CD4-positive, alpha-beta T cell (primary cell): ENCODE measurements at regions of chr1 and their contacts with region 1.

Region 1: GRCh38 chr1:64923294-64923721 is 43.0 kb downstream of the JAK1 start:
- DNase-seq: peak in 4 of 14 experiments; percentile 16 to 68 (median 34)
- ATAC-seq: peak; percentile 40
- H3K4me3 ChIP-seq: no peak overlapping the region
- H3K4me3 Mint-ChIP-seq: peak overlapping the region; percentile 22
- H3K27ac ChIP-seq: no peak overlapping the region
- H3K27ac Mint-ChIP-seq: peak overlapping the region; percentile 57
- H3K4me1 ChIP-seq: peaks cover 66% of the 10 kb centered on the region
- H3K4me1 Mint-ChIP-seq: peaks cover 99% of the 10 kb centered on the region
- H3K27me3 ChIP-seq: no peaks in the 10 kb centered on the region
- H3K27me3 Mint-ChIP-seq: no peaks in the 10 kb centered on the region
- CTCF ChIP-seq: no peak

Region 2: DNA sequence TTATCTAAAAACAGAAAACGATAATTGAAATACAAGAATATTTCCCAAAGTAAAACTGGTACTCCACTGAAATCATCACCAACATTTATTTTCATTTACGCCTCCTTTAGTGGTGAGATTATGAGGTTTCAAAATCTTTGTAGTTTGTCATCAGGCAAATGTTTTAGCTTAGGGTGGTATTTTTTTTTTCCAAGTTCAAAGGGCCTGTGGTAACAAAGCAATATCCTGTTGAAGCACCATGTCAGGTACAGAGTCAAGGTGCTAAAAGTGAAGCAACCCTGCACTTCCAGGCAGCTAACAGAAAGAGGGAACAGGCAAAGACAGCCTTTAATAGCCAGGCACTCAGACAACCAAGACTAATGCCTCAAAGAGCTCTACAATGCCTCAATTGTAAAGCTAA is 46.2 kb before region 1 on chr1:
- CTCF ChIA-PET with region 1: interaction called, 4 read pairs
- POLR2A ChIA-PET with region 1: interaction called, 4 read pairs
- intact Hi-C with region 1: loop called in 1 of 2 experiments (anchors 5 kb)
- DNase-seq: peak in 10 of 14 experiments; percentile 15 to 90 (median 36)
- ATAC-seq: peak; percentile 93
- H3K4me3 ChIP-seq: no peak overlapping the region
- H3K4me3 Mint-ChIP-seq: peak overlapping the region; percentile 68
- H3K27ac ChIP-seq: peak overlapping the region in 1 of 2 donors; percentile 53
- H3K27ac Mint-ChIP-seq: peak overlapping the region; percentile 82
- H3K4me1 ChIP-seq: peaks cover 33% of the 10 kb centered on the region
- H3K4me1 Mint-ChIP-seq: peaks cover 84% of the 10 kb centered on the region
- H3K27me3 ChIP-seq: no peaks in the 10 kb centered on the region
- H3K27me3 Mint-ChIP-seq: no peaks in the 10 kb centered on the region
- CTCF ChIP-seq: no peak

Region 3: DNA sequence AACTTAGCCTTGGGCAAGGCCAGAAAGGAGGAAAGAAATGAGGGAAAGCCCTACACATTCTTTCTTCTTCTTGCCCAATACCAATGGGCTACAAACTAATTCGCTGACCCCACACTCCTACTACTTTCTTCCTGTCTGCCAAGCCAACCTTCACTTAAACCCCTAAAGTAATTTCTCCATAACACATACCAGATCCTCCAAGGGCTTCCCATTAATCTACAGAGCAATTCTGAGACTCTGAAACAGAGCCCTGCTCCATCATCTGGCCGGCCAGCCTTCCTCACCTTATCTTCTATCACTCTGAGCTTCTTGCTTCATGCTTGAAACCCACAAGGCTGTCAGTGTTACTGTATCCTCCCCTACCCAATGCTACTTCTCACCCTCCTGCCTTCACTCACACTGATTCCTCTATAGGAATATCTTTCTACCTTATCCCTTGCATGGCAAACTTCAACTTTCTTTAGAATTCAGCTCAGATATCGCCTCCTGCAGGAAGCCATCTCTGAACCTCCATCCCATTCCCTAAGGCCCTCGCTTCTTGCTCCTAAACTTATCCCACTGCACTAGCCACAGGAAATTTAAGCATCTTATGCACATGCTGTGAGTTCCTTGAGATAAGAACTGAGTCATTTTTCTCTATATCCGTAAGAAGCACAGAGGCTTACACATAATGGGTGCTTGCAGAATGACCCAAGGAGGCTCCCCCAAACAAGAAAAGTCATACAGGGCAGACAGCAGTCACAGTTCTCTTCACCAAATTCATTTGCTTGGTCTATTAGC is 38.9 kb before region 1 on chr1:
- CTCF ChIA-PET with region 1: no interaction called
- POLR2A ChIA-PET with region 1: no interaction called
- intact Hi-C with region 1: loop called (anchors 5 kb)
- DNase-seq: no peak
- ATAC-seq: no peak
- H3K4me3 ChIP-seq: no peak overlapping the region
- H3K4me3 Mint-ChIP-seq: no peak overlapping the region
- H3K27ac ChIP-seq: no peak overlapping the region
- H3K27ac Mint-ChIP-seq: peak overlapping the region; percentile 2
- H3K4me1 ChIP-seq: peaks cover 24% of the 10 kb centered on the region
- H3K4me1 Mint-ChIP-seq: peaks cover 82% of the 10 kb centered on the region
- H3K27me3 ChIP-seq: no peaks in the 10 kb centered on the region
- H3K27me3 Mint-ChIP-seq: no peaks in the 10 kb centered on the region
- CTCF ChIP-seq: no peak

Region 4: GRCh38 chr1:64906447-64906846 is 16.9 kb before region 1 on chr1:
- CTCF ChIA-PET with region 1: interaction called, 5 read pairs
- POLR2A ChIA-PET with region 1: interaction called, 4 read pairs
- intact Hi-C with region 1: loop called (anchors 2 kb)
- DNase-seq: no peak
- ATAC-seq: no peak
- H3K4me3 ChIP-seq: no peak overlapping the region
- H3K4me3 Mint-ChIP-seq: peak overlapping the region; percentile 26
- H3K27ac ChIP-seq: no peak overlapping the region
- H3K27ac Mint-ChIP-seq: peak overlapping the region; percentile 29
- H3K4me1 ChIP-seq: peaks cover 35% of the 10 kb centered on the region
- H3K4me1 Mint-ChIP-seq: peaks cover 97% of the 10 kb centered on the region
- H3K27me3 ChIP-seq: no peaks in the 10 kb centered on the region
- H3K27me3 Mint-ChIP-seq: no peaks in the 10 kb centered on the region
- CTCF ChIP-seq: no peak

Region 5: GRCh38 chr1:64940025-64940424 is 16.7 kb after region 1 on chr1:
- CTCF ChIA-PET with region 1: interaction called, 3 read pairs
- POLR2A ChIA-PET with region 1: interaction called, 6 read pairs
- intact Hi-C with region 1: loop called in 1 of 2 experiments (anchors 2 kb)
- DNase-seq: no peak
- ATAC-seq: peak; percentile 62
- H3K4me3 ChIP-seq: no peak overlapping the region
- H3K4me3 Mint-ChIP-seq: peak overlapping the region; percentile 72
- H3K27ac ChIP-seq: no peak overlapping the region
- H3K27ac Mint-ChIP-seq: peak overlapping the region; percentile 69
- H3K4me1 ChIP-seq: peaks cover 40% of the 10 kb centered on the region
- H3K4me1 Mint-ChIP-seq: peaks cover 91% of the 10 kb centered on the region
- H3K27me3 ChIP-seq: no peaks in the 10 kb centered on the region
- H3K27me3 Mint-ChIP-seq: no peaks in the 10 kb centered on the region
- CTCF ChIP-seq: no peak

Region 6: GRCh38 chr1:64956733-64957441 is 33.6 kb after region 1 on chr1:
- CTCF ChIA-PET with region 1: interaction called, 9 read pairs
- POLR2A ChIA-PET with region 1: interaction called, 5 read pairs
- intact Hi-C with region 1: loop called (anchors 5 kb)
- DNase-seq: peak in 4 of 14 experiments; percentile 26 to 47 (median 42)
- ATAC-seq: peak; percentile 31
- H3K4me3 ChIP-seq: peak overlapping the region; percentile 8
- H3K4me3 Mint-ChIP-seq: no peak overlapping the region
- H3K27ac ChIP-seq: peak overlapping the region; percentile 1 to 10
- H3K27ac Mint-ChIP-seq: no peak overlapping the region
- H3K4me1 ChIP-seq: peaks cover 67% of the 10 kb centered on the region
- H3K4me1 Mint-ChIP-seq: peaks cover 58% of the 10 kb centered on the region
- H3K27me3 ChIP-seq: no peaks in the 10 kb centered on the region
- H3K27me3 Mint-ChIP-seq: no peaks in the 10 kb centered on the region
- CTCF ChIP-seq: no peak

Region 7: GRCh38 chr1:65002508-65003315 is 79.4 kb after region 1 on chr1:
- CTCF ChIA-PET with region 1: interaction called, 7 read pairs
- POLR2A ChIA-PET with region 1: no interaction called
- intact Hi-C with region 1: loop called in 1 of 2 experiments (anchors 10 kb)
- DNase-seq: peak; percentile 47 to 92 (median 64)
- ATAC-seq: peak; percentile 89
- H3K4me3 ChIP-seq: peak overlapping the region; percentile 67
- H3K4me3 Mint-ChIP-seq: peak overlapping the region; percentile 74
- H3K27ac ChIP-seq: no peak overlapping the region
- H3K27ac Mint-ChIP-seq: peak overlapping the region; percentile 86
- H3K4me1 ChIP-seq: peaks cover 23% of the 10 kb centered on the region
- H3K4me1 Mint-ChIP-seq: peaks cover 27% of the 10 kb centered on the region
- H3K27me3 ChIP-seq: no peaks in the 10 kb centered on the region
- H3K27me3 Mint-ChIP-seq: no peaks in the 10 kb centered on the region
- CTCF ChIP-seq: no peak